ENCODE measurements at regions of chr6 and their contacts with region 1.

Region 1: GRCh38 chr6:16332175-16332542 is 93.8 kb downstream of the GMPR start:
- DNase-seq: no peak
- ATAC-seq: peak; percentile 87
- H3K4me3 ChIP-seq: no peak overlapping the region
- H3K27ac ChIP-seq: no peak overlapping the region
- H3K4me1 ChIP-seq: peaks cover 6 to 35% of the 10 kb centered on the region in 2 experiments; a peak in 3 of 4 replicates
- H3K27me3 ChIP-seq: no peaks in the 10 kb centered on the region
- CTCF ChIP-seq: peak; percentile 85 to 95 (median 92)
- POLR2A ChIP-seq: no peak
- RAD21 ChIP-seq: peak; percentile 95

Region 2: GRCh38 chr6:15763837-15764236 is 568.3 kb before region 1 on chr6:
- CTCF ChIA-PET with region 1: no interaction called
- POLR2A ChIA-PET with region 1: no interaction called
- RAD21 ChIA-PET with region 1: no interaction called
- intact Hi-C with region 1: no loop called
- DNase-seq: peak; percentile 27
- ATAC-seq: peak; percentile 67
- H3K4me3 ChIP-seq: no peak overlapping the region
- H3K27ac ChIP-seq: no peak overlapping the region
- H3K4me1 ChIP-seq: peaks cover 9 to 10% of the 10 kb centered on the region in 2 experiments
- H3K27me3 ChIP-seq: peaks cover 12% of the 10 kb centered on the region; the same call in 1 of the 2 replicates
- CTCF ChIP-seq: no peak
- POLR2A ChIP-seq: no peak
- RAD21 ChIP-seq: no peak

Region 3: DNA sequence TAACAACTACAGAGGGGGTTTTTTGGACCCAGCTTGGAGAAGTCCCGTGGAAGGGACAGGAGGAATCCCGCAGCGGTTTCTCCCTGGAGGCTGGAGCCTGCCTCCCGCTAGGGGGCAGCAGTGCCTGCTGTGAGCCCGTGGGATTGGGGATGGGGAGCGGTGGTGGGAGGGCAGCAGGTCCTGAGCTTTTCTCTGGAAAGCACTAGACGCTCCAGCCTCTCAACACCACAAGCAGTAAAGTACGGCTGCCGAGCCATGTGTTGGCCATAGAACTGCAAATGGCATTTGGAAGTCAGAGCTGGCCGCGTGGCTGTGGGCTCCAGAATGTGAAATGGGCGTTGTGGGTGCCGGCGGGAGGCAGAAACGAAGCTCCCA is 46.0 kb before region 1 on chr6:
- CTCF ChIA-PET with region 1: interaction called, 4 read pairs
- POLR2A ChIA-PET with region 1: no interaction called
- RAD21 ChIA-PET with region 1: no interaction called
- intact Hi-C with region 1: loop called (anchors 1 kb)
- DNase-seq: peak; percentile 6
- ATAC-seq: peak; percentile 92
- H3K4me3 ChIP-seq: no peak overlapping the region
- H3K27ac ChIP-seq: no peak overlapping the region
- H3K4me1 ChIP-seq: no peaks in the 10 kb centered on the region
- H3K27me3 ChIP-seq: no peaks in the 10 kb centered on the region
- CTCF ChIP-seq: peak; percentile 68 to 97 (median 91)
- POLR2A ChIP-seq: no peak
- RAD21 ChIP-seq: peak; percentile 77

Region 4: DNA sequence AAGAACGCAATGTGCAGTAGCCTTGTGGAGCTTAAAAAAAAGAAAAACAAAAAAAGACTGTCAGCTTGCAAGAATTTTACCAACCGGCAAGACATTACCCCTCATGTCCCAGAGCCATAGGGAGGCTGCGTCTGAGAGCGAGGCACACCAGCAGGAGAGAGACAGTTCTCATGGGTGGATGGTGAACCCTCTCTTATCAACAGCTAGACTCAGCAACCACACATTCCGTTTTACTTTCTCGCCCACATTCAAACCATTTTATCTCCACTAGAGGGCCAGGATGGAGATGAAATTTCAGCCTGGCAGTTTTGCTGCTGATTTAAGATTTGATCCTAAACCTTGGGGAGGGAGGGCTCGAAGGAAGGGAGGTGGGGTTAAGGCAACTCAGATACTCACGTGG is 182.1 kb after region 1 on chr6:
- CTCF ChIA-PET with region 1: interaction called, 5 read pairs
- POLR2A ChIA-PET with region 1: no interaction called
- RAD21 ChIA-PET with region 1: no interaction called
- intact Hi-C with region 1: loop called (anchors 2 kb)
- DNase-seq: no peak
- ATAC-seq: peak; percentile 62
- H3K4me3 ChIP-seq: no peak overlapping the region
- H3K27ac ChIP-seq: no peak overlapping the region
- H3K4me1 ChIP-seq: peaks cover 30 to 40% of the 10 kb centered on the region in 2 experiments
- H3K27me3 ChIP-seq: no peaks in the 10 kb centered on the region
- CTCF ChIP-seq: peak; percentile 53 to 69 (median 59); a peak in 5 of 6 replicates
- POLR2A ChIP-seq: no peak
- RAD21 ChIP-seq: peak; percentile 55

Region 5: GRCh38 chr6:16770701-16771569 is 438.8 kb after region 1 on chr6:
- CTCF ChIA-PET with region 1: interaction called, 4 read pairs
- POLR2A ChIA-PET with region 1: no interaction called
- RAD21 ChIA-PET with region 1: no interaction called
- intact Hi-C with region 1: loop called (anchors 2 kb)
- DNase-seq: peak; percentile 68
- ATAC-seq: peak; percentile 74
- H3K4me3 ChIP-seq: peak overlapping the region in 1 of 2 experiments; percentile 6; a peak in 2 of 4 replicates
- H3K27ac ChIP-seq: peak overlapping the region; percentile 70; the same call in 1 of the 2 replicates
- H3K4me1 ChIP-seq: peaks cover 47 to 57% of the 10 kb centered on the region in 2 experiments
- H3K27me3 ChIP-seq: no peaks in the 10 kb centered on the region
- CTCF ChIP-seq: peak; percentile 86 to 97 (median 96)
- POLR2A ChIP-seq: no peak
- RAD21 ChIP-seq: peak; percentile 71

Region 6: GRCh38 chr6:17093686-17094085 is 761.5 kb after region 1 on chr6:
- CTCF ChIA-PET with region 1: no interaction called
- POLR2A ChIA-PET with region 1: no interaction called
- RAD21 ChIA-PET with region 1: no interaction called
- intact Hi-C with region 1: loop called (anchors 2 kb)
- DNase-seq: no peak
- ATAC-seq: peak; percentile 83
- H3K4me3 ChIP-seq: no peak overlapping the region
- H3K27ac ChIP-seq: no peak overlapping the region
- H3K4me1 ChIP-seq: peaks cover 0 to 2% of the 10 kb centered on the region in 2 experiments; a peak in 1 of 4 replicates
- H3K27me3 ChIP-seq: no peaks in the 10 kb centered on the region
- CTCF ChIP-seq: peak; percentile 36 to 56 (median 52); a peak in 5 of 6 replicates
- POLR2A ChIP-seq: no peak
- RAD21 ChIP-seq: peak; percentile 70